ENCODE measurements at regions of chr13 and their contacts with region 1.

Region 1: DNA sequence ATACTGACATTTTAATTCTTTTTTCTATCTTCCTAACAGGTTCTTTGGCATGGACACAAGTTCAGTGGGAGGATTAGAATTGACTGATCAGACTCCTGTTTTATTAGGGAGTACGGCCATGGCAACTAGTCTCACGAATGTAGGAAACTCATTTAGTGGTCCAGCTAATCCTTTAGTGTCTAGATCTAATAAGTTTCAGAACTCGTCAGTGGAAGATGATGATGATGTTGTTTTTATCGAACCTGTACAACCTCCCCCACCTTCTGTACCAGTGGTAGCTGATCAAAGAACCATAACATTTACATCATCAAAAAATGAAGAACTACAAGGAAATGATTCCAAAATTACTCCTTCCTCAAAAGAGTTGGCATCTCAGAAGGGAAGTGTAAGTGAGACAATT is 34.5 kb downstream of the ZMYM2 start:
- DNase-seq: no peak
- H3K4me3 ChIP-seq: no peak overlapping the region
- H3K27ac ChIP-seq: no peak overlapping the region
- H3K4me1 ChIP-seq: no peaks in the 10 kb centered on the region
- H3K27me3 ChIP-seq: no peaks in the 10 kb centered on the region
- CTCF ChIP-seq: no peak

Region 2: DNA sequence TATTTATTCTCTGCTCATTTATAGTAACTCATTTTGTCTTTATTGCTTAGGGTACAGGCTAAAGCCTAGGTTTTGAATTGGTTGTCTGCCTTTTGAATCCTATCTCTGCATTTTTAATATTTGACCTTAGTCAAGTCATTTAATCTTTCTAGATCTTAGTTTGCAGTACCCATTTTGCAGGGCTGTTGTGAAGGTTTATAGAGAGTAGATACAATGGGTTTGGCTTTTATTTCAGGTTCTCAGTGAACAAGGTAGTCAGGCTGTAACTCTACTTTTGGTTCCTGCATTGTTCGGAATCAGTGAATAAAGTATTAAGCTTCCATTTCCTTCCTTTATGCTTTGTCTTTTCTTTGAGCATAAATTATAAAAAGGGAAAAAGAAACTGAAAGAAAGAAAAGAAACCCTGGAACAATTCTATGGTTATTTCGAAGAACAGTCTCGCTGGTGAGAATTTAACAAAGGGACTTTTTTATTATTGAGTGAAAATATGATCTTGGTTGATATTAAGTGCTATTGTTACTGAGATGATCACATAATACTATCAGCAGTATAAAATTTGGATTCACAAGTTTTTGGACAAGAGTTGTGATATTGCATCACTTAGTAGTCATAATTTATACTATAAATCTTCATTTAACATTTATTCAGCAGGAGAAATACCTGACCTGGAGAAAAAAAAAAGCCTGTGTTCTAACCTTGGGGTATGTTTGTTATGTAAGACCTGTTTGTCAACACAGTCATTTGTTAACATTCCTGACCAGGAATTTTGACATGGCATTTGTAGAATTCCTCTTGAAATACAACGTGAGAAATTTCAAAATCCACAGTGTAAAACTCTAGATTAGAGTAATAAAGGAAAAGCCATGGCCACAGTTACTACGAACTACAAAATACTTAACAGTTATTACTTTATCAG is 56.8 kb after region 1 on chr13:
- CTCF ChIA-PET with region 1: no interaction called
- POLR2A ChIA-PET with region 1: no interaction called
- intact Hi-C with region 1: loop called (anchors 10 kb)
- DNase-seq: peak in 1 of 2 experiments; percentile 51
- H3K4me3 ChIP-seq: no peak overlapping the region
- H3K27ac ChIP-seq: no peak overlapping the region
- H3K4me1 ChIP-seq: 0 out of 2 replicates have a peak, but pooled peaks cover 18% of the 10 kb centered on the region
- H3K27me3 ChIP-seq: no peaks in the 10 kb centered on the region
- CTCF ChIP-seq: no peak

Measured in PC-9 (cell line).